B cell (primary cell): ENCODE measurements at regions of chr16 and their contacts with region 1.

Region 1: DNA sequence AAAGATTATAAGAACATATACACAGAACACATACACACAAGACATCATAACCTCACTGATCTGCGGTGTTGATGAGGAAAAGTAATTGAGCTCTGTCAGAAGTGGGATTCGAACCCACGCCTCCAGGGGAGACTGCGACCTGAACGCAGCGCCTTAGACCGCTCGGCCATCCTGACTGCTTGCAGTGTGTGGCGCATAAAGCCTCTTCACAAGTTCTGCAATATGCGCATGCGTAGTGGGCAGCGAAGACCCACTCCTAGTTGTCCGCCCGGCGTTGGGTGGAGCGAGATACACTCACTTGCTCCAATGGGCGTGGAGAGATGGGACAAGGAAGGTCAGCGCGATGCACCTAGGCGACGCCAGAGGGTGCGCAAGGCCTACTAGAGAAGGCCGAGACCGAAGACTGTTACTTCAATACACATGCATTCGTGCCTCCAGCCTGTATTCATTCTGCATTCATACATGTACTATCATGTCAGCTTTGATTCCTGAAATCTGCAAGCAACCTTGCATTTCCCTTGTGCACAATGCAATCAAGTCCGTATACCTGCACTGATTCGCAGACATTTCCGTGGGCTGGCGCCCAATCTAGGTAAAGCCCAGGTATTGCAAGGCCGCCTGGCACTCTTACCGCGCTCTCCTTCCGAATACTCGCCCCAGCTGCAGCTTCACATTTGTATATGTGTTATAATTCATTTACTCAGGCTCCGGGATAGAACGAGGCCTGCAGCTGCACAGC is 16.1 kb upstream of the PLLP start:
- DNase-seq: peak; percentile 100
- ATAC-seq: peak; percentile 93
- H3K4me3 ChIP-seq: peak overlapping the region; percentile 59 to 89 (median 71)
- H3K4me3 Mint-ChIP-seq: no peak overlapping the region
- H3K27ac ChIP-seq: peak overlapping the region; percentile 76 to 85
- H3K27ac Mint-ChIP-seq: no peak overlapping the region
- H3K4me1 ChIP-seq: peaks cover 14 to 31% of the 10 kb centered on the region in 2 donors
- H3K4me1 Mint-ChIP-seq: peaks cover 19% of the 10 kb centered on the region
- H3K27me3 ChIP-seq: no peaks in the 10 kb centered on the region
- H3K27me3 Mint-ChIP-seq: no peaks in the 10 kb centered on the region
- CTCF ChIP-seq: peak; percentile 92

Region 2: GRCh38 chr16:57084257-57084770 is 216.2 kb before region 1 on chr16:
- CTCF ChIA-PET with region 1: no interaction called
- POLR2A ChIA-PET with region 1: no interaction called
- intact Hi-C with region 1: loop called (anchors 5 kb)
- DNase-seq: peak; percentile 86
- ATAC-seq: peak; percentile 89
- H3K4me3 ChIP-seq: no peak overlapping the region
- H3K4me3 Mint-ChIP-seq: no peak overlapping the region
- H3K27ac ChIP-seq: no peak overlapping the region
- H3K27ac Mint-ChIP-seq: peak overlapping the region; percentile 13
- H3K4me1 ChIP-seq: peaks cover 4 to 8% of the 10 kb centered on the region in 2 donors
- H3K4me1 Mint-ChIP-seq: peaks cover 11% of the 10 kb centered on the region
- H3K27me3 ChIP-seq: no peaks in the 10 kb centered on the region
- H3K27me3 Mint-ChIP-seq: no peaks in the 10 kb centered on the region
- CTCF ChIP-seq: peak; percentile 98

Region 3: GRCh38 chr16:57284208-57284951 is 16.2 kb before region 1 on chr16 and contains the start of gene PLLP:
- CTCF ChIA-PET with region 1: interaction called, 3 read pairs
- POLR2A ChIA-PET with region 1: no interaction called
- intact Hi-C with region 1: loop called (anchors 1 kb)
- DNase-seq: peak; percentile 60
- ATAC-seq: peak; percentile 67
- H3K4me3 ChIP-seq: peak within 1 kb of the TSS in 4 of 5 experiments; percentile 27 to 64 (median 53)
- H3K4me3 Mint-ChIP-seq: peak within 1 kb of the TSS; percentile 78
- H3K27ac ChIP-seq: no peak within 1 kb of the TSS
- H3K27ac Mint-ChIP-seq: no peak within 1 kb of the TSS
- H3K4me1 ChIP-seq: peaks cover 12 to 16% of the 10 kb centered on the region in 2 donors
- H3K4me1 Mint-ChIP-seq: peaks cover 11% of the 10 kb centered on the region
- H3K27me3 ChIP-seq: peaks cover 0 to 36% (median 18%) of the 10 kb centered on the region in 4 experiments
- H3K27me3 Mint-ChIP-seq: peaks cover 34% of the 10 kb centered on the region
- CTCF ChIP-seq: no peak
- total RNA-seq, gene PLLP: not detected in 2 replicates

Region 4: GRCh38 chr16:57413301-57413730 is 112.8 kb after region 1 on chr16:
- CTCF ChIA-PET with region 1: interaction called, 364 read pairs
- POLR2A ChIA-PET with region 1: interaction called, 14 read pairs
- intact Hi-C with region 1: loop called (anchors 1 kb)
- DNase-seq: peak; percentile 90
- ATAC-seq: peak; percentile 85
- H3K4me3 ChIP-seq: no peak overlapping the region
- H3K4me3 Mint-ChIP-seq: peak overlapping the region; percentile 30
- H3K27ac ChIP-seq: peak overlapping the region; percentile 74 to 80
- H3K27ac Mint-ChIP-seq: peak overlapping the region; percentile 71
- H3K4me1 ChIP-seq: peaks cover 47 to 58% of the 10 kb centered on the region in 2 donors
- H3K4me1 Mint-ChIP-seq: peaks cover 61% of the 10 kb centered on the region
- H3K27me3 ChIP-seq: no peaks in the 10 kb centered on the region
- H3K27me3 Mint-ChIP-seq: no peaks in the 10 kb centered on the region
- CTCF ChIP-seq: no peak

Region 5: DNA sequence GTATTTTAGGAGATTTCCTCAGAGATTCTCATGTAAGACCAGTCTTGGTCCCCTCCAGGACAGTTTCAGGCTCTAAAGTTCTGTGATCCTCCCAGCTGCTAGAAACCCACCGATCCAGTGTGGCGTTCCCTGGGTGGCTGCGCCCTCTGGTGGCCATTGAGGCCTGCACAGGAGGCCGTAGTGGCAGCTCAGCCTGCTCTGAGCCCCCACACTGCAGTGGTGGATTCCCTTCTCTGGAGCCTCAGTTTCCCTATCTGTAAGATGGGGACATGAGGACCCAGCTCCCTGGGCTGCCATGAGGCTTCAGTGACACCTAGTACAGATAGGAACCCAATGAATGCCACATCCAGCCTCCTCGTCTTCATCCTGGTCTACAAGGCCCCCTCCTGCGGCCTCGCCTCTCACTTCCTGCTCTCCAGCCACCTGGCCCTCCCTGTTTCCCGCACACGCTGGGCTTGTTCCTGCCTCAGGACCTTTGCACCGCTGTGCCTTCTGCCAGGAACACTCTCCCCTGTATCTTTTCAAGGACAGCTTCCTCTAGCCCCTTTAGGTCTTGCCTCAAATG is 219.3 kb after region 1 on chr16:
- CTCF ChIA-PET with region 1: interaction called, 25 read pairs
- POLR2A ChIA-PET with region 1: interaction called, 4 read pairs
- intact Hi-C with region 1: loop called (anchors 1 kb)
- DNase-seq: peak; percentile 83
- ATAC-seq: peak; percentile 76
- H3K4me3 ChIP-seq: no peak overlapping the region
- H3K4me3 Mint-ChIP-seq: no peak overlapping the region
- H3K27ac ChIP-seq: no peak overlapping the region
- H3K27ac Mint-ChIP-seq: no peak overlapping the region
- H3K4me1 ChIP-seq: peaks cover 26 to 39% of the 10 kb centered on the region in 2 donors
- H3K4me1 Mint-ChIP-seq: peaks cover 38% of the 10 kb centered on the region
- H3K27me3 ChIP-seq: no peaks in the 10 kb centered on the region
- H3K27me3 Mint-ChIP-seq: no peaks in the 10 kb centered on the region
- CTCF ChIP-seq: peak; percentile 98

Region 6: DNA sequence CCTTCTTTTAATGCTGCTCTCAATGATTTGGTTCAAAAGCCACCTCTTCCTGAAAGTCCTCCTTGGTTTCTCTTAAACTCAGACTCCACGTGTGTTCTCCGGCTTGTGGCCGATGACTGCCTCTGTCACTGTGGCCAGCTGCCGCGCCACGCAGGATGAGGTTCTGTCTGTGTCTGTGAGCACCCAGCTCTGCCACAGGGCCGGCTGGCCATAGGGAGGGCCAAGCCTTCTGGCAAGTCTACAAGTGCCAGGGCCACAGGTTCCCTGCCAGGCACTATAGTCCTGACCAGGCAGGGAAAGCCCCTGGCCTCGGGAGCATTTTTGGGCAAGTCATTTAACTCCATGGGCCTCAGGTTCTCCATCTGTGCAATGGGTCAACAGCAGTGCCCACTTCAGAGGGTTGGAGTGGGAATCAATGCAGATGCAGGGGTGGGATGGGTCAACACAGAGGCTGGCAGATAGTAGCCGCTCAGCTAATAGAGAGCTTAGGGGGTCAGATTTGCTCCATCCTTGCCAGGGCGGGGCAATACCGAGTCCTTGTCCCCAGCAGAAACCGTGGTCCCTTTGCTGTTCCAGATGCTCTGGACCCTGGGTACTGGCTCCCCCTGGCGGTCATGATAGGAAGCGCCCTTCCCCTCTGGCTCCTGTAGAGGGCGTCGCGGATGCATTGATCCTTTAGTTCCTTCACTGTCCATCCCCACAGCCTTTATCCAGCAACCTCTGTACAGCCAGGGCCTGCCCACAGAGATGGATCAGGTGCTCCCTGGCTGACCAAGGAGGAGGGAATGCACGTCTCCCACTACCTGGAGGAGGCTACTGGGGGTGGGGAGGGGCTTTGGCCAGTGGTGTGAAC is 348.3 kb after region 1 on chr16:
- CTCF ChIA-PET with region 1: interaction called, 5 read pairs
- POLR2A ChIA-PET with region 1: no interaction called
- intact Hi-C with region 1: loop called (anchors 1 kb)
- DNase-seq: peak; percentile 83
- ATAC-seq: peak; percentile 82
- H3K4me3 ChIP-seq: no peak overlapping the region
- H3K4me3 Mint-ChIP-seq: no peak overlapping the region
- H3K27ac ChIP-seq: peak overlapping the region; percentile 36 to 61
- H3K27ac Mint-ChIP-seq: peak overlapping the region; percentile 53
- H3K4me1 ChIP-seq: peaks cover 23 to 27% of the 10 kb centered on the region in 2 donors
- H3K4me1 Mint-ChIP-seq: peaks cover 32% of the 10 kb centered on the region
- H3K27me3 ChIP-seq: peaks cover 0 to 3% (median 0%) of the 10 kb centered on the region in 4 experiments
- H3K27me3 Mint-ChIP-seq: no peaks in the 10 kb centered on the region
- CTCF ChIP-seq: peak; percentile 99